A673 (cell line): ENCODE measurements at regions of chr5 and their contacts with region 1.

Region 1: GRCh38 chr5:127746756-127747155 is 43.6 kb downstream of the CCDC192 start:
- DNase-seq: peak; percentile 4
- H3K4me3 ChIP-seq: no peak overlapping the region
- H3K27ac ChIP-seq: no peak overlapping the region
- H3K4me1 ChIP-seq: no peaks in the 10 kb centered on the region
- H3K27me3 ChIP-seq: no peaks in the 10 kb centered on the region
- CTCF ChIP-seq: peak; percentile 45; the same call in 1 of the 2 replicates

Region 2: DNA sequence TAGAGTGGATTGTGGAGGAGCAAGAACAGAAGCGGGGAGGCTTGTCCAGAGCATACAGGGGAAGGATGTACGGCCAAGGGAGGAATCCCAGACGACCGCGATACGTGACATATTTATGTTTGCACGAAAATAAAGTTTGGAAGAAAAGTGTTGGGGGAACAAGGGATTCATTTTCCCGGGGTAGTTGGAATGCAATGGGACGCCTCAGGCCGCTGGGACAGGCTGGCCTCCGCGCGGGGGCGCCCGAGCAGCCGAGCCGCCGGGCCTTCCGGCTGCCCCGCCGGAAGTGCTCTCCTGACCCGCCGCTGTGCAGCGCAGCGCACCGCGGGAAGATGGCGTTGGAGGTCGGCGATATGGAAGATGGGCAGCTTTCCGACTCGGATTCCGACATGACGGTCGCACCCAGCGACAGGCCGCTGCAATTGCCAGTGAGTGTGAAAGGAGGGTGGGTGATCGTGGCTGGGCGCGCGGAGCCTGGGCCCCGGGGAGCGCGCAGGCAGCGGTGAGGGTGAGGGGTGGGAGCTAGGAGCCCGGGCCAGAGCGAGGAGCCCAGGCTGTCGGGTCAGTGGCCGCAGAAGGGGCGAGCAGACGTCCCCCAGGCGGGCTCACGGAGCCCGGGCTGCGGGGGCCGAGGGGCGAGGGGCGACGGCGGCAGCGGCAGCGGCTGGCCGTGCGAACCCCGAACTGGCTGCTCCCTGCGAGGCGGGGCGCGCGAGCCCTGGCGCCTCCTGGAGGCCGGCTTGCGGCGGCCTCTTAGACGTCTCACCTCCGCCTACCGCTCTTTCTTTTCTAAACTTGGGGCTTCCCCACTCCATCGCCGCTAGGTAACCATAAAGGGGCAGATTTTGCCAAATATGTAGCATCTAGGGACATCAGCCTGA is 1145.9 kb before region 1 on chr5 and contains the start of gene PHAX:
- CTCF ChIA-PET with region 1: no interaction called
- POLR2A ChIA-PET with region 1: no interaction called
- intact Hi-C with region 1: no loop called
- DNase-seq: peak; percentile 86
- H3K4me3 ChIP-seq: peak within 1 kb of the TSS; percentile 98
- H3K27ac ChIP-seq: peak within 1 kb of the TSS; percentile 90
- H3K4me1 ChIP-seq: peaks cover 7% of the 10 kb centered on the region
- H3K27me3 ChIP-seq: no peaks in the 10 kb centered on the region
- CTCF ChIP-seq: peak; percentile 75
- total RNA-seq, gene PHAX: 71.3 and 73.1 TPM in 2 replicates

Region 3: GRCh38 chr5:127326428-127326827 is 420.3 kb before region 1 on chr5:
- CTCF ChIA-PET with region 1: no interaction called
- POLR2A ChIA-PET with region 1: no interaction called
- intact Hi-C with region 1: no loop called
- DNase-seq: no peak
- H3K4me3 ChIP-seq: no peak overlapping the region
- H3K27ac ChIP-seq: no peak overlapping the region
- H3K4me1 ChIP-seq: no peaks in the 10 kb centered on the region
- H3K27me3 ChIP-seq: no peaks in the 10 kb centered on the region
- CTCF ChIP-seq: no peak

Region 4: GRCh38 chr5:127820910-127821553 is 74.3 kb after region 1 on chr5:
- CTCF ChIA-PET with region 1: no interaction called
- POLR2A ChIA-PET with region 1: no interaction called
- intact Hi-C with region 1: no loop called
- DNase-seq: no peak
- H3K4me3 ChIP-seq: no peak overlapping the region
- H3K27ac ChIP-seq: no peak overlapping the region
- H3K4me1 ChIP-seq: no peaks in the 10 kb centered on the region
- H3K27me3 ChIP-seq: peaks cover 25% of the 10 kb centered on the region
- CTCF ChIP-seq: no peak

Region 5: GRCh38 chr5:128053291-128053954 is 306.7 kb after region 1 on chr5:
- CTCF ChIA-PET with region 1: no interaction called
- POLR2A ChIA-PET with region 1: no interaction called
- intact Hi-C with region 1: no loop called
- DNase-seq: no peak
- H3K4me3 ChIP-seq: no peak overlapping the region
- H3K27ac ChIP-seq: no peak overlapping the region
- H3K4me1 ChIP-seq: no peaks in the 10 kb centered on the region
- H3K27me3 ChIP-seq: no peaks in the 10 kb centered on the region
- CTCF ChIP-seq: no peak

Region 6: DNA sequence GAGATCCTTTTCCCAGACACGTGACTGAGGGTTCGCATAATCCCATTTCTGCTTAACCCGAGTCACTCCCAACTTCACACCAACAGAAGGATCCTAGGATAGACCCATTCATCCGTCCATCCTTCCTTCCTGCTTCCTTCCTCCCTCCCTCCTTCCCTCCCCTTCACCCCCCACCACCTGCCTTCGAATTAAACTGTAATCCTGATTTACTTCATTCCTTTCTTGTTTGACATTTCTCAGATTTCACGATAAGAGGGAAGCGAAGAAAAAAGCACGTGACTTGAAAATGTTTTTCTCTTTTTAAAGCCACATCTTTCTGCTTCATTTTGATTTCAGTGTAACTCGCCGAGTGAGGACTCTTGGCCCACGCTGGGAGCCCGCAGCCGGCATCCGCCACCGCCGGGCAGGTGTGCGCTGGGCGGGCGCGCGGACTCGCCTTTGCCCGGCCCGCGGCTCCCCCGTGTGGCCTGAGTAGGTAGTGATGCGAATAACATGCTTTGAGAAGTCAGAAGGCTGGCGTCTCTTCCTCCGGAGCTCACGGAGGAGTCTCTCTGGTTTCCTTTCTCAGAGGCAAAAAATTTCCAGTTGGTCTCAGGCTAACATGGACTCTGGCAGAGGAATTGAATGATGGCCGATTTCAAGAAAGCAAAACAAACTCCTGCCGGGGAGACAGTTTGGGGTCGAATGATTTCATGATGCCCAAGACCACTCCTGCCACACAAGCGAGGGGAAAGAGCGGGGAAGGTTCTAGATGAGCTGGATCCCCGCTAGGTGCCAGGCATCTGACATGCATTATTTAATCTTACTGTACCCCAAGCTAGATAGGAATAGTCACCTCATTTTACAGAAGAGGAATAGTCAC is 454.5 kb after region 1 on chr5:
- CTCF ChIA-PET with region 1: no interaction called
- POLR2A ChIA-PET with region 1: no interaction called
- intact Hi-C with region 1: loop called (anchors 2 kb)
- DNase-seq: peak; percentile 69
- H3K4me3 ChIP-seq: peak overlapping the region; percentile 28
- H3K27ac ChIP-seq: no peak overlapping the region
- H3K4me1 ChIP-seq: peaks cover 4% of the 10 kb centered on the region
- H3K27me3 ChIP-seq: no peaks in the 10 kb centered on the region
- CTCF ChIP-seq: peak; percentile 75